HCT116 (cell line): ENCODE measurements at regions of chr13 and their contacts with region 1.

Region 1: GRCh38 chr13:26929971-26930730 is 169.6 kb upstream of the GPR12 start:
- DNase-seq: peak; percentile 54
- ATAC-seq: peak; percentile 95
- H3K4me3 ChIP-seq: peak overlapping the region; percentile 2 to 23; a peak in 1 of 4 replicates
- H3K27ac ChIP-seq: no peak overlapping the region
- H3K4me1 ChIP-seq: peaks cover 0 to 5% of the 10 kb centered on the region in 2 experiments; a peak in 1 of 4 replicates
- H3K27me3 ChIP-seq: peaks cover 13% of the 10 kb centered on the region
- CTCF ChIP-seq: peak; percentile 56 to 97 (median 89)
- POLR2A ChIP-seq: no peak
- RAD21 ChIP-seq: peak; percentile 73

Region 2: GRCh38 chr13:26482451-26483197 is 447.5 kb before region 1 on chr13:
- CTCF ChIA-PET with region 1: no interaction called
- POLR2A ChIA-PET with region 1: no interaction called
- RAD21 ChIA-PET with region 1: no interaction called
- intact Hi-C with region 1: loop called (anchors 5 kb)
- DNase-seq: peak; percentile 76
- ATAC-seq: peak; percentile 78
- H3K4me3 ChIP-seq: peak overlapping the region; percentile 2 to 50; a peak in 2 of 4 replicates
- H3K27ac ChIP-seq: no peak overlapping the region
- H3K4me1 ChIP-seq: peaks cover 3 to 9% of the 10 kb centered on the region in 2 experiments; a peak in 3 of 4 replicates
- H3K27me3 ChIP-seq: no peaks in the 10 kb centered on the region
- CTCF ChIP-seq: peak; percentile 48 to 87 (median 83); a peak in 5 of 6 replicates
- POLR2A ChIP-seq: no peak
- RAD21 ChIP-seq: peak; percentile 59